ENCODE measurements at regions of chr11 and their contacts with region 1.

Region 1: DNA sequence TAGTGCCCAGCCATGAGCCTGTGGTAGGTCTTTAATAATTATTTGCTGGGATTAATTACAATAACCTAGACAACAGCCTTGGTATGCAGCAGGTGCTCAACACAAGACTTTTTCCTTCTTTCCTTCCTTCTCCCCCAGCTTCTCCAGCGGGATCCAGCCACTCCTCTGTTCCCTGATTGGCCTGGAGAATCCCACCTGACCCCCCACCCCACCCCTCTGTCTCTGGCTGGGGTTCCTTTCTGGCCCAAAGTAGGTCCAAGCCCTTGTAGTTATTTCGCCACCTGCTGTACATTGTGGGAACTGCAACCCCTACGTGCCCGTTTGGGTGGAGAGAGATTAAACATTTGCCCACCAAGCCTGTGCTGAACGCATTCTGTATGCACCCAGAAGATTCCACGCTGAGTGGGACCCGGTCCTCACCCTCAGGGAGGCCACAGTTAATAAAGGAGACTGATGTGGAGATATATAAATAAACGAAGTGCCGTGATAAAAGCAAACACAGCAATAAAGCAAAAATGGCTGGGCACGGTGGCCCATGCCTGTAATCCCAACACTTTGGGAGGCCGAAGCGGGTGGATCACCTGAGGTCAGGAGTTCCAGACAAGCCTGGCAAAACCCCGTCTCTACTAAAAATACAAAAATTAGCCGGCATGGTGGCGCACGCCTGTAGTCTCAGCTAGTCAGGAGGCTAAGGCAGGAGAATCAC is 32.1 kb upstream of the DGKZ start:
- DNase-seq: peak; percentile 85
- H3K4me3 Mint-ChIP-seq: no peak overlapping the region
- H3K27ac Mint-ChIP-seq: no peak overlapping the region
- H3K4me1 Mint-ChIP-seq: peaks cover 20% of the 10 kb centered on the region
- H3K27me3 Mint-ChIP-seq: no peaks in the 10 kb centered on the region

Region 2: GRCh38 chr11:45964911-45965389 is 350.2 kb before region 1 on chr11:
- CTCF ChIA-PET with region 1: interaction called, 10 read pairs
- intact Hi-C with region 1: no loop called
- DNase-seq: peak; percentile 72
- H3K4me3 Mint-ChIP-seq: no peak overlapping the region
- H3K27ac Mint-ChIP-seq: no peak overlapping the region
- H3K4me1 Mint-ChIP-seq: no peaks in the 10 kb centered on the region
- H3K27me3 Mint-ChIP-seq: no peaks in the 10 kb centered on the region

Region 3: DNA sequence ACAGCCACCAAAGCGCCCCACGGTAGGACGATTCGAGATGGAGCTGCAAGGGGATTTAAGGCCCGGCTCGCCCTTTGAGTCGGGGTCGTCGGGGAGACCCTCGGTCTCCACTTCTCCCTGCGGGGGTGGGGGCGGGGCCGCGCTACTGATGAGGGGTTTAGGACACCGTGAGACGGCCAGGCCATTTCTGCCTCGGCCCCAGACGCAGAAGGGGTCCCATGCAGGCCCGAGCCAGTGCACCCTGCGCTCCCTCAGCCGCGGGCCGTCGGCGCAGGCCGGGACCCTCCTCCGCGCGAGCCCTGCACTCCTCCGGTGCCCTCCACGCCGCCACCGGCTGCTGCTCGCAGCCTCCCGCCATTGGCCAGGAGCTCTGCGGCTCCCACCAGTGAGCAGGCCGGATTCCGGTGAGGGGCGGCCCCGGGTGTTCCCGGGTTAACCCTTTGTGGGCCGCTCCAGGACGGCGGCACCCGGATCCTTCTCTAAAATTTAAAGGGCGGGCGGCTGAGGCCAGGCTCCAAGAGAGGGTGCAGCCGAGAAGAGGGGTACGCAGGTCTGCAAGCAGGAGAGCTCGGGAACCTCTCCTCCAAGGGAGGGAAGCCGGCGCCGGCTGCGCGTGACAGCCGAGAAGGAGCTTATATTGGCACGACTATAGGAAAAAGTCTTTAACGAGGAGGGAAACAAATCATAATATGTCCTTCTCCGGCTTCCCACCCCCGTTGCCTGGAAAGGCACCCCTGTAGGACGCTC is 19.7 kb before region 1 on chr11:
- CTCF ChIA-PET with region 1: interaction called, 68 read pairs
- intact Hi-C with region 1: no loop called
- DNase-seq: peak; percentile 71
- H3K4me3 Mint-ChIP-seq: peak overlapping the region; percentile 76
- H3K27ac Mint-ChIP-seq: no peak overlapping the region
- H3K4me1 Mint-ChIP-seq: peaks cover 11% of the 10 kb centered on the region
- H3K27me3 Mint-ChIP-seq: peaks cover 6% of the 10 kb centered on the region

Region 4: GRCh38 chr11:46332568-46333393 is 17.6 kb after region 1 on chr11:
- CTCF ChIA-PET with region 1: interaction called, 40 read pairs
- intact Hi-C with region 1: no loop called
- DNase-seq: peak; percentile 62
- H3K4me3 Mint-ChIP-seq: peak overlapping the region; percentile 80
- H3K27ac Mint-ChIP-seq: no peak overlapping the region
- H3K4me1 Mint-ChIP-seq: peaks cover 76% of the 10 kb centered on the region
- H3K27me3 Mint-ChIP-seq: no peaks in the 10 kb centered on the region

Region 5: GRCh38 chr11:46346886-46347636 is 31.9 kb after region 1 on chr11 and contains the start of gene DGKZ:
- CTCF ChIA-PET with region 1: interaction called, 11 read pairs
- intact Hi-C with region 1: loop called (anchors 2 kb)
- DNase-seq: peak; percentile 86
- H3K4me3 Mint-ChIP-seq: peak within 1 kb of the TSS; percentile 84
- H3K27ac Mint-ChIP-seq: peak within 1 kb of the TSS; percentile 92
- H3K4me1 Mint-ChIP-seq: peaks cover 80% of the 10 kb centered on the region
- H3K27me3 Mint-ChIP-seq: no peaks in the 10 kb centered on the region
- total RNA-seq, gene DGKZ: 82.9 to 89.2 TPM

Region 6: DNA sequence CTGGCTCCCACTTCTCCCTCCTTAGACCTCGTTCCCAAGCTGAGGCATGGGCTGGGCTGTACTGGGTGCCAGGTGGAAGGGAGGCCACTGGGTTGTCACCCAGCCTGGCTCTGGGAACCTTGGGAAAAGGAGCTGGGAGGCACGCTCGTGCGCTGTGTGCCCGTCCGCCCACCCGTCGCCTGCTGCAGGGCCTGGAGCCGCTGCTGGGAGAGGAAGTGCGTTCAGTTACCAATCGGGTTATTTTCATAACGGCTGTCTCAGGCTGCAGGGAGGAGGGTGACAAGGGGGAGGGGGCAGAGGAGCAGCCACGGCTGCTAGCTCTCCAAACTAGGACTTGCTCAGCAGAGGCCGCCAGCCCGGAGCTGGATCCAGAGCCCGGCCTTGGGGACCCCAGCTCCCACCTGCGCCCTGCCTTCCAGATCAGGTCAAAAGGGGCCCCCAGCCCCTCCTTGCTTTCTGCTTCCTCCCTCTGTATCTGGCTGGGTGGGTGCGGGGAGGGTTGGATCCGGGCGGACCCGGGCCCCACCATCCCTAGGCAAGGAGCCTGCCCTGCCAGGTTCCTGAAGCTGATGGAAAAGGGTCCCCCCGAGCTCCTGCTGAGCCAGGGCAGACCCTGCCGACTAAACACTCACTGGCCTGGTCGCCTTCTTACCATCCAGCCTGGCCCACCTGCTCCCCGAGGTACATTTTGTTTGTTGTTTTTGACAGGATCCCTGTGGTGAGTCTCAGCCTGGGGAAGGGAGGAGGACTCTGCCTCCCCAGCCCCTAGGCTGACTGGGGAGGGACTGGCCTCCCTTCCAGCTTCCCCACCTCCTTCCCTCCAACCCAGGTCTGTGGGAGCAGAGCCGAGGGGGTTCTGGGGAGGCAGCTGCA is 46.3 kb after region 1 on chr11:
- CTCF ChIA-PET with region 1: interaction called, 10 read pairs
- intact Hi-C with region 1: no loop called
- DNase-seq: peak; percentile 87
- H3K4me3 Mint-ChIP-seq: peak overlapping the region; percentile 78
- H3K27ac Mint-ChIP-seq: peak overlapping the region; percentile 95
- H3K4me1 Mint-ChIP-seq: peaks cover 58% of the 10 kb centered on the region
- H3K27me3 Mint-ChIP-seq: no peaks in the 10 kb centered on the region

Measured in activated naive CD4-positive, alpha-beta T cell treated with anti-CD3 and anti-CD28 coated beads for 36 hours (primary cell).